ENCODE measurements at regions of chr13 and their contacts with region 1.

Region 1: GRCh38 chr13:51452361-51453206 is at the start of gene INTS6:
- DNase-seq: peak; percentile 58
- CTCF ChIP-seq: no peak

Region 2: DNA sequence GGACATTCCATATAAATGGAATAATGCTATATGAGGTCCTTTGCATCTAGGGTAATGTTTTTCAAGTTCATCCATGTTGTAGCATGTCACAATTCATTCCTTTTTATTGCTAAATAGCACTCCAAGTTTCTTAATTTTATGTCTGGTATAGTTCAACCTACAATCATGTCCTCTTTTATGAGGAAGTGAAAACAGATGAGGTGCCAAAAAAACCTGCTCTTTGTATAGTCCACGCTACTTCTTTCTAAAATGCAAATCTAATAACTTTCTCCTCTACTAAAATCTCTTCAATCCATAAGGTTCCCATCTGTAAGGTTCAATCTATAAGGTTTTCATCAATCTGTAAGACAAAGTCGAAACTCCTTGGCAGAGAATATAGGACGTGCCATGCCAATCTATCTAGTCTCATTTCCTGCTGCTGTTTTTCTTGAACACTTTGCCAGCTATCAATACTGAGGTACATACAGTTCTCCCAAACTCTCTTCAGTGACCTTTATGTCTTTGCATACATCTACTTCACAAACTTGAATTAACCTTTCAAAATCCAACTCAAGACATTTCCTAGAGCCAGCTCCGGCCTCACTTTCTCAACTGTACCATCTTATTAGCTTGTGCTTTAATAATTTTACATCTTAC is 33.5 kb before region 1 on chr13:
- CTCF ChIA-PET with region 1: no interaction called
- POLR2A ChIA-PET with region 1: interaction called, 12 read pairs
- DNase-seq: no peak
- CTCF ChIP-seq: no peak

Region 3: GRCh38 chr13:51435002-51435578 is 17.5 kb before region 1 on chr13:
- CTCF ChIA-PET with region 1: interaction called, 4 read pairs
- POLR2A ChIA-PET with region 1: interaction called, 15 read pairs
- DNase-seq: no peak
- CTCF ChIP-seq: peak; percentile 21

Region 4: GRCh38 chr13:51481656-51482055 is 29.1 kb after region 1 on chr13:
- CTCF ChIA-PET with region 1: no interaction called
- POLR2A ChIA-PET with region 1: no interaction called
- DNase-seq: no peak
- CTCF ChIP-seq: no peak

Region 5: GRCh38 chr13:51583875-51584730 is 131.5 kb after region 1 on chr13 and contains the start of gene WDFY2:
- CTCF ChIA-PET with region 1: interaction called, 3 read pairs
- POLR2A ChIA-PET with region 1: interaction called, 26 read pairs
- DNase-seq: peak; percentile 97
- CTCF ChIP-seq: no peak

Region 6: GRCh38 chr13:51614350-51614786 is 161.8 kb after region 1 on chr13:
- CTCF ChIA-PET with region 1: no interaction called
- POLR2A ChIA-PET with region 1: interaction called, 26 read pairs
- DNase-seq: peak; percentile 48
- CTCF ChIP-seq: no peak

Region 7: DNA sequence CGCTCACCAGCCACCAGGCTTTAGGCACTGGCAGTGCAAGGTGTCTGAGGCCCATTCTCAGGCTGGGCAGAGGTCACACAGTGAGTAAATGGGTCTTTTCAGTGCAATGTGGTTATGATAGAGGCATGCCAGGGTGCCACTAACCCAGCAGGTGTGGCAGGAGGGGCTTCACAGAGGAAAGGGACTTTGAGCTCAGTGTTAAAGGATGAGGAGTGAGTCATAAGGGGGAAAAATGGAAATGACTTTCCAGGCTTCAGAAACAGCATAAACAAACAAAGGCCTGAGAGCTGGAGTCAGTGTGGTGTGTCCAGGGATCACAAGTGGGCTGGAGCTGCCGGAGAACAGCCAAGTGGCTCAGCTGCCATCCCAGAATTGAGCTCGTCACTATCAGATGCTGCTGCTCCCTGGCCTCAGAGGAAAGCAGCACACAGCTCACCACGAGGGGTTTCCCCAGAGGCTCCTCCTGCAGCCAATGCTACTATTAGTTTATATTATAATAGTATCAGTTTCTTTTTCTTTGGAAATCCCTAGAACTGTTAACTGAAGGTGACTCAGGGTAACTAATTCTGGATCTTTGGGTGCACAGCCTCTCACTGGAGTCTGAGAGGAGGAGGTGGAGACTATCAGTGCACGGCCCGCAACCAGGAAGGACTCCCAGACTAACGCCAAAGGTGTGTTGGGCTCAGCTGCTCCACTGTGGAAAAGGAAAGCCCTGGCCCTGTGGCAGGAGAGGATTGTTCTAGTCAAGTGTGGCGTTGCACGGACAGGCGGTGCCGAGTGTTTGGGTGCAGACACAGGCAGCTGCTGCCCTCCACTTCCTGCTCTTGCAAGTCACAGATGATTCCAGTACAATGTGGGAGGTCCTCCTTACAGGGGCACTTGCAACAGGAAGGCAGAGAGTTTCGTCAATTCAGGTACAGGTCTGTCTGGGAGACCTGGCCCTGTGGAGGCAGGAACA is 311.9 kb after region 1 on chr13:
- CTCF ChIA-PET with region 1: no interaction called
- POLR2A ChIA-PET with region 1: interaction called, 13 read pairs
- DNase-seq: peak; percentile 79
- CTCF ChIP-seq: no peak